HCT116 (cell line): ENCODE measurements at regions of chr20 and their contacts with region 1.

Region 1: DNA sequence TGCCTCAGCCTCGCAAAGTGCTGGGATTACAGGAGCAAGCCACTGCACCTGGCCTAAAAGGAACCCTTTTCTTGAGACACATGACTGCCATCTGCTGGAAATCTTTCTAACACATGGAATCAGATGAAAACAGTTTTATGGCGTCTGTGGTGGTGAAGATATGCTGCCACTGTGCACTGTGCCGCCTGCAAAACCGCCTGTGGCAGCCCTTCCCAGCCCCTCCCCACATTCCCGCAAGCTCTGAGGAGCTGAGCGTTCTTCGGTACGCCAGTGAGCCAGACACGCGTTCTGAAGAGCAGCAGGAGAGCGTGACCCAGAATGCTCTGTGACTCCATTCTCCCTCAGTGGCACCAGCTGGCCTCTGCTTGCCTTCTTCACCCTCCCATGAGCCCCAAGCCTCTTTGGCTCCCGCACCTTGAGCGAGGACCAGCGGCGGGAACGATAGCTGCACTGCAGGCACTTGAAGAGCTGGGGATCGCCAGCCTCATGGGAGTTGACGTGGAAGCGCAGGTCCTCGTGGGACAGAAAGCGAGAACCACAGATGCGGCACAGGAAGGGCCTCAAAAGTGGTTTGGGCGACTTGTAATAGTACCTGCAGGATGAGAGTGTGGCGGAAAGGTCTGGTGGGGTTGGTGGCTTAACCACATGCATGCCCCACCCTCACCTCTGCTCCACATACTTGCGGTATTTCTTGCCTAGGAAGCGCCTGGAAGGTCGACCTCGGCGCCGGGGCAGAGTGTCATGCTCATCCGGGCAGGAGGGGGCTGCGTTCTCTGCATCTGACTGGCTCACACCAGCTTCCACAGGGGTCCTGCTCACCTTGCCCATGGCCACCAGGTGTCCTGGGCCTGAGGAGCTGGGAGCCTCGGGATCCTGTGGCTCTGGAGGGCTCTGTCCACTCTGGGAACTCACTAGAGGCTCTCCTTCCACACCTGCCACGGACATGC is 8.7 kb downstream of the ZNF335 start:
- DNase-seq: no peak
- ATAC-seq: peak; percentile 85
- H3K4me3 ChIP-seq: no peak overlapping the region
- H3K27ac ChIP-seq: no peak overlapping the region
- H3K4me1 ChIP-seq: no peaks in the 10 kb centered on the region
- H3K27me3 ChIP-seq: no peaks in the 10 kb centered on the region
- CTCF ChIP-seq: peak; percentile 19 to 49 (median 45); a peak in 3 of 6 replicates
- POLR2A ChIP-seq: no peak
- RAD21 ChIP-seq: peak; percentile 67

Region 2: GRCh38 chr20:45798935-45799642 is 164.2 kb before region 1 on chr20:
- CTCF ChIA-PET with region 1: no interaction called
- POLR2A ChIA-PET with region 1: no interaction called
- RAD21 ChIA-PET with region 1: no interaction called
- intact Hi-C with region 1: loop called (anchors 1 kb)
- DNase-seq: no peak
- ATAC-seq: peak; percentile 97
- H3K4me3 ChIP-seq: no peak overlapping the region
- H3K27ac ChIP-seq: no peak overlapping the region
- H3K4me1 ChIP-seq: no peaks in the 10 kb centered on the region
- H3K27me3 ChIP-seq: no peaks in the 10 kb centered on the region
- CTCF ChIP-seq: peak; percentile 35 to 75 (median 72); a peak in 5 of 6 replicates
- POLR2A ChIP-seq: no peak
- RAD21 ChIP-seq: peak; percentile 64

Region 3: GRCh38 chr20:45823949-45824835 is 139.1 kb before region 1 on chr20:
- CTCF ChIA-PET with region 1: interaction called, 6 read pairs
- POLR2A ChIA-PET with region 1: no interaction called
- RAD21 ChIA-PET with region 1: interaction called in 1 of 2 experiments, 3 read pairs
- intact Hi-C with region 1: loop called (anchors 2 kb)
- DNase-seq: no peak
- ATAC-seq: peak; percentile 82
- H3K4me3 ChIP-seq: no peak overlapping the region
- H3K27ac ChIP-seq: no peak overlapping the region
- H3K4me1 ChIP-seq: peaks cover 9 to 22% of the 10 kb centered on the region in 2 experiments; a peak in 3 of 4 replicates
- H3K27me3 ChIP-seq: no peaks in the 10 kb centered on the region
- CTCF ChIP-seq: peak; percentile 31 to 61 (median 61); a peak in 4 of 6 replicates
- POLR2A ChIP-seq: no peak
- RAD21 ChIP-seq: peak; percentile 68

Region 4: GRCh38 chr20:46243707-46244628 is 280.6 kb after region 1 on chr20:
- CTCF ChIA-PET with region 1: no interaction called
- POLR2A ChIA-PET with region 1: no interaction called
- RAD21 ChIA-PET with region 1: no interaction called
- intact Hi-C with region 1: no loop called
- DNase-seq: no peak
- ATAC-seq: no peak
- H3K4me3 ChIP-seq: no peak overlapping the region
- H3K27ac ChIP-seq: no peak overlapping the region
- H3K4me1 ChIP-seq: peaks cover 0 to 3% of the 10 kb centered on the region in 2 experiments; a peak in 1 of 4 replicates
- H3K27me3 ChIP-seq: no peaks in the 10 kb centered on the region
- CTCF ChIP-seq: no peak
- POLR2A ChIP-seq: no peak
- RAD21 ChIP-seq: no peak